ENCODE measurements at regions of chr4 and their contacts with region 1.

Region 1: GRCh38 chr4:143482840-143483239 is 30.7 kb upstream of the SMARCA5 start:
- DNase-seq: peak; percentile 61

Region 2: DNA sequence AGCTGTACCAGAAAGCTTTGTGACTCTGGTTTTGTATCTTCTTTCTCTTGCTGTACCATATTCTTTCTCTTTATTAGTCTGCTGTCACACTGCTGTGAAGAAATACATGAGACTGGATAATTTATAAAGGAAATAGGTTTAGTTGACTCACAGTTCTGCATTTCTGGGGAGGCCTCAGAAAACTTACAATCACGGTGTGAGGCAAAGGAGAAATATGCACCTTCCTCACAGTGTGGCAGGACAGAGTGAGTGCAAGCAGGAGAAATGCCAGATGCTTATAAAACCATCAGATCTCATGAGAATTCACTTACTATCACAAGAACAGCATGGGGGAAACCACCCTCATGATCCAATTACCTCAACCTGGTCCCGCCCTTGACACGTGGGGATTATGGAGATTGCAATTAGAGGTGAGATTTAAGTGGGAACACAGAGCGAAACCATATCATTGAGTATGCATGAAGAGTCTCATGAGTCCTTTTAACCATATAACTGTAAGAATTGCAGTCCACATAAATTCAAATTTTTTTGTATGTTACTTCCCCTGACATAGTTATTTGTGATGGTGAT is 569.3 kb before region 1 on chr4:
- in situ Hi-C with region 1: no loop called
- DNase-seq: no peak

Region 3: GRCh38 chr4:143184217-143185116 is 298.4 kb before region 1 on chr4 and contains the start of gene USP38:
- in situ Hi-C with region 1: no loop called
- DNase-seq: peak; percentile 87

Region 4: DNA sequence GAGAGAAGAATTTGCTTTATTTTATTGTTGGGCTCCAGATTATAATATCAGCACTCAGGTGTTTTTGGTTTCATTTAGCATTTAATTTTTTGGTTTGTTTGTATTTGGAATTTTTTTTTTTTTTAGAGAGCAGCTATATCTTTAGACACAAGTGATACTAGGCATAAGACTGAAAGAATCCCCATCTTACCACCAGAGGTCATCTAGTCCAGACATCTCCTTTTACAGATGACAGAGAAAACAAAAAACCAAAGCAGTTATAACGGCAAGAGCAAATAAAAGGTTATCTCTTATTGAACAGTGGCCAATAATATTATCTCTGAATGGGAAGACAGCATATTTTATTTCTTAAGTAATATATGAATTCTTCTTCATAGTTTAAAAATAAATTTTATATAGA is 275.3 kb before region 1 on chr4:
- in situ Hi-C with region 1: loop called (anchors 25 kb)
- DNase-seq: peak; percentile 23

Measured in KBM-7 (cell line).